IMR-90 (cell line): ENCODE measurements at regions of chr3 and their contacts with region 1.

Region 1: GRCh38 chr3:29515451-29515850 is 234.6 kb downstream of the RBMS3 start:
- DNase-seq: peak; percentile 83
- ATAC-seq: peak; percentile 49
- H3K4me3 ChIP-seq: no peak overlapping the region
- H3K27ac ChIP-seq: no peak overlapping the region
- H3K4me1 ChIP-seq: peaks cover 13% of the 10 kb centered on the region; the same call in 1 of the 2 replicates
- H3K27me3 ChIP-seq: no peaks in the 10 kb centered on the region
- CTCF ChIP-seq: no peak
- POLR2A ChIP-seq: no peak
- RAD21 ChIP-seq: no peak; the same call in 1 of the 2 replicates

Region 2: DNA sequence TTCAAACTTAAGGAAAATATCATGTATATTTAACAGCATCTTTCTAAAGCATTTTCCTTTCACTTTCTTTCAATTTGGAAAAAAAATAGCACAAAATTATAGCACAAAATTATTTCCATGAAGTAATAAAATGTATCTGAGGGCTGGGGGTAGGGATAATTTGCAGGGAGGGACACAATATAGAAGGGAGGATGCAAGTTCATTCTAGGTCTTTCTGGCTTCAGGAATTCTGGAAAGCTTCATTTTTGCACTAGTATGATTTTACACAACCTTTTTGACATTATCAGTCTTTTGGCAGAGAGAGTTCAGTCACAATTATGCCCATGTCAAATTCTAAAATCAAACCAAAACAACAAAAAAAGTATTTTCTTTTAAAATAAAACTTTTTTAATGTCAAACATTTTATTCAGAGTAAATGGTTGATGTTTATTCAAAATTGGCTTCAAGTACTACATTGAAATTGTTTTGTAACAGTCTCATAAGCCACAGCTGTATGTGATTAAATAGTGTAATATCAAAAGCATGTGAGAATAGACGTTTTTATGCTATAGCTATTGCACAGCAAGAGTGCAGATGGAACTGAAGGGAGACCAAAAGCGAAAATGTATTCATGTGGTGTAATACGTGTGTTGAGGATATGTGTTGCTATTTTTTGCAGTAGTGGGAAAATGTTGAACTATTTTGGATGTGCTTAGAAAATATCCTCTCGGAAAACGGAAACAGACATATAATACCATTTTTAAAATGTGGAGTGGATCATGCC is 228.8 kb before region 1 on chr3:
- CTCF ChIA-PET with region 1: no interaction called
- POLR2A ChIA-PET with region 1: no interaction called
- dilution Hi-C with region 1: no loop called
- in situ Hi-C with region 1: no loop called
- intact Hi-C with region 1: no loop called
- DNase-seq: peak; percentile 82
- ATAC-seq: 0 out of 2 replicates have a peak, but pooled peaks have one; percentile 18
- H3K4me3 ChIP-seq: peak overlapping the region; percentile 20; the same call in 1 of the 2 replicates
- H3K27ac ChIP-seq: peak overlapping the region; percentile 50; the same call in 1 of the 2 replicates
- H3K4me1 ChIP-seq: peaks cover 4% of the 10 kb centered on the region; the same call in 1 of the 2 replicates
- H3K27me3 ChIP-seq: no peaks in the 10 kb centered on the region
- CTCF ChIP-seq: no peak
- POLR2A ChIP-seq: no peak
- RAD21 ChIP-seq: no peak

Region 3: DNA sequence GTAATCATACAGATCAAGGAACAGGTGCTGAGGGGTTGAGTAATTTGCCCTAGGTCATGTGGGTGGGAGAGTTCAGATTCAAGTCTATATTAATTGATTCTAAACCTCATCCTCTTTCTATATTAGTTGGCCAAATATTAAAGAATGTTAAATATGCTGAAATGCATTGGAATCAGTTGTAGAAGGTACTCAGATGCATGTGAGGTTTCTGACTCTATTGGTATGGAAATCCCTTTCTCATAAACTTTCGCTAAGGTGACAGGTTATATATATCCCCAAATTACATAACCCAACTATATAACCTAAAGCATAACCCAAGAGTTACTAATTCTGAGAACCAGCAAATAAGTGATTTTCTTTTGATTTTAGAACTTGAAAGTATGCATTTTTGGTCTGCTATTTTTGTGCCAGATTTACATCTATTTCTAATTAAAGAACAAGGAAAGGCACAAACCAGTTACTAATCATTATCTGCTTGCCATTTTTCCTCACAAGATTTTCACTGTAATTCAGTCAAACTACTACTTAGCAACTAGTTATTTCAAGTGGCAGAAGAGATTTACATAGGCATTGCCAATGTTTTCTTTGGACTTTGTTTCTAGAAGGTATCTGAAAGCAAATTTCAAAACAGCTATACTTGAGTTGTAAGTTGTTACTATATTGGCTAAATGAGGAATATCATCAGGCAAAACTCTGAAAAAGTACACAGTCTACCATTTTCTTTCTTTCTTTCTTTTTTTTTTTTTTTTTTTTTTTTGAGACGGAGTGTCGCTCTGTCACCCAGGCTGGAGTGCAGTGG is 33.3 kb before region 1 on chr3:
- CTCF ChIA-PET with region 1: no interaction called
- POLR2A ChIA-PET with region 1: no interaction called
- dilution Hi-C with region 1: no loop called
- in situ Hi-C with region 1: no loop called
- intact Hi-C with region 1: loop called (anchors 5 kb)
- DNase-seq: no peak
- ATAC-seq: no peak
- H3K4me3 ChIP-seq: no peak overlapping the region
- H3K27ac ChIP-seq: no peak overlapping the region
- H3K4me1 ChIP-seq: peaks cover 2% of the 10 kb centered on the region; the same call in 1 of the 2 replicates
- H3K27me3 ChIP-seq: no peaks in the 10 kb centered on the region
- CTCF ChIP-seq: no peak
- POLR2A ChIP-seq: no peak
- RAD21 ChIP-seq: no peak